SK-N-SH (cell line): ENCODE measurements at regions of chr2 and their contacts with region 1.

Region 1: GRCh38 chr2:20962939-20963557 is 80.8 kb downstream of the APOB start:
- DNase-seq: peak; percentile 84
- H3K4me3 ChIP-seq: no peak overlapping the region; a peak in 1 of 4 replicates
- H3K27ac ChIP-seq: no peak overlapping the region
- H3K4me1 ChIP-seq: no peaks in the 10 kb centered on the region; a peak in 1 of 4 replicates
- H3K27me3 ChIP-seq: peaks cover 14% of the 10 kb centered on the region; the same call in 1 of the 2 replicates
- CTCF ChIP-seq: peak; percentile 98
- EP300 ChIP-seq: no peak
- RAD21 ChIP-seq: peak; percentile 97

Region 2: GRCh38 chr2:19702267-19702666 is 1260.8 kb before region 1 on chr2:
- CTCF ChIA-PET with region 1: no interaction called
- POLR2A ChIA-PET with region 1: no interaction called
- DNase-seq: no peak
- H3K4me3 ChIP-seq: no peak overlapping the region
- H3K27ac ChIP-seq: no peak overlapping the region
- H3K4me1 ChIP-seq: no peaks in the 10 kb centered on the region
- H3K27me3 ChIP-seq: no peaks in the 10 kb centered on the region; the same call in 1 of the 2 replicates
- CTCF ChIP-seq: no peak
- EP300 ChIP-seq: no peak
- RAD21 ChIP-seq: no peak

Region 3: GRCh38 chr2:20682167-20682920 is 280.7 kb before region 1 on chr2:
- CTCF ChIA-PET with region 1: interaction called, 96 read pairs
- POLR2A ChIA-PET with region 1: no interaction called
- DNase-seq: no peak
- H3K4me3 ChIP-seq: no peak overlapping the region; a peak in 1 of 4 replicates
- H3K27ac ChIP-seq: no peak overlapping the region
- H3K4me1 ChIP-seq: peaks cover 0 to 6% of the 10 kb centered on the region in 2 experiments; a peak in 2 of 4 replicates
- H3K27me3 ChIP-seq: no peaks in the 10 kb centered on the region
- CTCF ChIP-seq: peak; percentile 69
- EP300 ChIP-seq: no peak
- RAD21 ChIP-seq: peak; percentile 72

Region 4: DNA sequence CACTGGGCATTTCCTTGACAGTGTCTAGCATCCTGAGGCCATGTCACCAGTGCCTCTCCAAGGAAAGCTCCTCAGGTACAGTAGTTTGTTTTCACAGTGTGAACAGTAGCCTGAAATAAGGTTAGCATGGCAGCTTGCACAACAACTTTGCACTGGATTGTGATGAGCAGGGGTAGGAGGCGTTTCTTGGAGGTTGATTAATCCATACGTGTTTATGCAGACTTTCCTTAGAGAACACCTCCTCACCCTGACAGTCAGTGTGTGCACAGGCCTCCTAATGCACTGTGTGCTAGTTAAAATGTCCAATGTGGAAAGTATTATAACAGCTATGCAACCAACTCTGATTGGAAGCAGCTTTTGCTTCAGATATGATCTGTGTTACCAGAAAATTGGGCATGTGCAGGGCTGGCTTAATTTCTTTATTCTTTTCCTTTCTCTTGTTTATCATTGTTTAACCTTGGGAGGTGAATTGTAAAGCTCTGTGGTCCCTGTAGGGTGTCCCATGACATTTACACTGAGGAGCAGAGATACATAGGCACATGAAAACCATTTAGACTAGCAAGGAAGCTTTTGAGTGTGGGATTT is 62.9 kb before region 1 on chr2:
- CTCF ChIA-PET with region 1: interaction called, 18 read pairs
- POLR2A ChIA-PET with region 1: no interaction called
- DNase-seq: peak; percentile 64
- H3K4me3 ChIP-seq: no peak overlapping the region
- H3K27ac ChIP-seq: peak overlapping the region in 1 of 2 experiments; percentile 87; a peak in 2 of 4 replicates
- H3K4me1 ChIP-seq: peaks cover 0 to 14% of the 10 kb centered on the region in 2 experiments; a peak in 2 of 4 replicates
- H3K27me3 ChIP-seq: peaks cover 17% of the 10 kb centered on the region
- CTCF ChIP-seq: no peak
- EP300 ChIP-seq: peak in 1 of 2 experiments; percentile 85; a peak in 2 of 4 replicates
- RAD21 ChIP-seq: peak; percentile 45; the same call in 1 of the 2 replicates

Region 5: GRCh38 chr2:20976527-20976926 is 13.5 kb after region 1 on chr2:
- CTCF ChIA-PET with region 1: interaction called, 75 read pairs
- POLR2A ChIA-PET with region 1: no interaction called
- DNase-seq: no peak
- H3K4me3 ChIP-seq: no peak overlapping the region
- H3K27ac ChIP-seq: no peak overlapping the region
- H3K4me1 ChIP-seq: no peaks in the 10 kb centered on the region; a peak in 1 of 4 replicates
- H3K27me3 ChIP-seq: no peaks in the 10 kb centered on the region
- CTCF ChIP-seq: no peak
- EP300 ChIP-seq: no peak
- RAD21 ChIP-seq: no peak

Region 6: GRCh38 chr2:21165350-21165749 is 202.3 kb after region 1 on chr2:
- CTCF ChIA-PET with region 1: interaction called, 10 read pairs
- POLR2A ChIA-PET with region 1: no interaction called
- DNase-seq: peak; percentile 34
- H3K4me3 ChIP-seq: no peak overlapping the region
- H3K27ac ChIP-seq: no peak overlapping the region
- H3K4me1 ChIP-seq: no peaks in the 10 kb centered on the region; a peak in 1 of 4 replicates
- H3K27me3 ChIP-seq: no peaks in the 10 kb centered on the region
- CTCF ChIP-seq: peak; percentile 44
- EP300 ChIP-seq: no peak
- RAD21 ChIP-seq: peak; percentile 67